ENCODE measurements at regions of chr2 and their contacts with region 1.

Region 1: DNA sequence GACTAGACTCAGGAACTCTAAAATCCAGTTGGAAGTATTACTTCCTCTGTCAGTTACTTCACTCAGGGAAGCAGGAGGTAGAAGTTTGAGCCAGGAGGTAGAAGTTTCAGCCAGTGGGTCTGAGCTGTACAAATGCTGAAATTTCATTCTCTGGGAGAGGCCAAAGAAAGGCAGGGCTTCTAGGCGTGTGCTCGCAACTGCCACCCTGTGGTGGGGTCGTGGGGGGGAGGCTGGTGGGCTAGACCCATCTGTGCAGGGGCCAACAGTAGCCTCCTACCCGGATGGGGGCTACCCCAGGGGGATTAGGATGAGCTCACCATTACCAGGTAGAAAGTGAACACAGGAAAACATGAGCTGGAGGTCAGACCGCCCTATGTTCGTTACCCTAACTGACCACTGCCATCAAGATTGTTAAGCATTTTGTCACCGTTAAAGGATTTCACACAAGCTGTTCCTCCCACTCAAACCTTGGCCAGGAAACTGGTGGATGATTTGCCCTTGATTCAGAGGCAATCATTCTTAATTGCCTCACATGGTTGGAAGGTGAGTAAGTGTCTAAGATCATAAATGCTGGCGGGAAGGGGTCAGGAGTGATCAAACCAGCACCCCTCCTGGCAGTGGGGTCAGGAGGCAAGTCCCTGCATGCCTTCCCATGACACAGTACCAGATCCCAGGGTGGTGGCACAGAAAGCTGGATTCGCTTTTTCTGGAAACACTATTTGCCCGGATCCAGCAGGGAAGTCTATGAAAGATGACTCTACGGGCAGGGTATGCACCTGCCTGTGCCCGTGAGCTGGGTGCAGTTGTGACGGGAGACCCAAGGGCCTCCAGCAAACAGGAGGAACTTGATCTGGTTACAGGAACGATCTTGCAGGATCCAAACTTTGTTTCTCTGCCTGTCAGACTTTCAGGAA is 5.2 kb upstream of the FHL2 start:
- DNase-seq: peak; percentile 66
- H3K4me3 Mint-ChIP-seq: peak overlapping the region; percentile 60
- H3K27ac Mint-ChIP-seq: peak overlapping the region; percentile 98
- H3K4me1 Mint-ChIP-seq: peaks cover 35% of the 10 kb centered on the region
- H3K27me3 Mint-ChIP-seq: no peaks in the 10 kb centered on the region
- CTCF ChIP-seq: peak; percentile 66

Region 2: DNA sequence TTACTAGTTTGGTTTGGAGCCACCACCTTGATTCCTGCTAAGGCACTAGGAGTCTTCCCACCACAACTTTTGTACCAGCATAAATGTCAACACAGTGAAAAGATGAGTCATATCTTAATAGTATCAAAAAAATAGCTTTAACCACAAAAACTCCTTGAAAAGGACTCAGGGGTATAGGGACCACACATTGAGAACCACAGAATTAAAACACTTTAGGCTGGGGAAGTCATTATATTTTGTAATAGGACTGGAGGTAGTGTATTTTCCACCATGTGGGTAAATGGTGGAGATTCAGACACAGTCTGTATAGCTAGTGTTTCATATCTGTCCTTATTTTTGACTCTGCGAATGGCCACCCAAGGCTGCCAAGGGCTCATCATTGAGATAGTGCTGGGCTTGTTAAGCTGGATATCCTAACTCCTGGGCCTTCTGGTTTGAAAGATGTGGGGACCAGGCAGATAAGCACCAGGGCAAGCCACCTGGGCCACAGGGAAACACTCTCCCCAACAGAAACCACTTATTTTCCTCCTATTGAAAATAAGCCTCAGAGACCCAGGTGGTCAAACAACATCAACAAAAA is 13.9 kb after region 1 on chr2:
- CTCF ChIA-PET with region 1: interaction called, 14 read pairs
- intact Hi-C with region 1: no loop called
- DNase-seq: no peak
- H3K4me3 Mint-ChIP-seq: no peak overlapping the region
- H3K27ac Mint-ChIP-seq: no peak overlapping the region
- H3K4me1 Mint-ChIP-seq: peaks cover 1% of the 10 kb centered on the region
- H3K27me3 Mint-ChIP-seq: no peaks in the 10 kb centered on the region
- CTCF ChIP-seq: no peak